Lower leg skin (tissue), 4 donors: ENCODE measurements at regions of chr17 and their contacts with region 1.

Region 1: GRCh38 chr17:79777894-79778503 is at the start of gene CBX2:
- DNase-seq: peak; percentile 28 to 94
- H3K4me3 ChIP-seq: peak within 1 kb of the TSS; percentile 29
- CTCF ChIP-seq: no peak
- POLR2A ChIP-seq: no peak
- total RNA-seq, gene CBX2: 1.9 to 3.8 (median 3.1) TPM

Region 2: GRCh38 chr17:79420318-79421243 is 357.4 kb before region 1 on chr17:
- intact Hi-C with region 1: no loop called
- DNase-seq: no peak
- H3K4me3 ChIP-seq: no peak overlapping the region
- CTCF ChIP-seq: no peak
- POLR2A ChIP-seq: no peak

Region 3: GRCh38 chr17:80219763-80220725 is 442.0 kb after region 1 on chr17 and contains the starts of genes SGSH and SLC26A11:
- intact Hi-C with region 1: loop called (anchors 5 kb)
- DNase-seq: peak; percentile 72 to 97
- H3K4me3 ChIP-seq: peak within 1 kb of the TSS; percentile 79
- CTCF ChIP-seq: no peak
- POLR2A ChIP-seq: no peak
- total RNA-seq, gene SGSH: 19.4 to 47.3 (median 37.0) TPM
- total RNA-seq, gene SLC26A11: 20.1 to 28.1 (median 22.3) TPM

Region 4: DNA sequence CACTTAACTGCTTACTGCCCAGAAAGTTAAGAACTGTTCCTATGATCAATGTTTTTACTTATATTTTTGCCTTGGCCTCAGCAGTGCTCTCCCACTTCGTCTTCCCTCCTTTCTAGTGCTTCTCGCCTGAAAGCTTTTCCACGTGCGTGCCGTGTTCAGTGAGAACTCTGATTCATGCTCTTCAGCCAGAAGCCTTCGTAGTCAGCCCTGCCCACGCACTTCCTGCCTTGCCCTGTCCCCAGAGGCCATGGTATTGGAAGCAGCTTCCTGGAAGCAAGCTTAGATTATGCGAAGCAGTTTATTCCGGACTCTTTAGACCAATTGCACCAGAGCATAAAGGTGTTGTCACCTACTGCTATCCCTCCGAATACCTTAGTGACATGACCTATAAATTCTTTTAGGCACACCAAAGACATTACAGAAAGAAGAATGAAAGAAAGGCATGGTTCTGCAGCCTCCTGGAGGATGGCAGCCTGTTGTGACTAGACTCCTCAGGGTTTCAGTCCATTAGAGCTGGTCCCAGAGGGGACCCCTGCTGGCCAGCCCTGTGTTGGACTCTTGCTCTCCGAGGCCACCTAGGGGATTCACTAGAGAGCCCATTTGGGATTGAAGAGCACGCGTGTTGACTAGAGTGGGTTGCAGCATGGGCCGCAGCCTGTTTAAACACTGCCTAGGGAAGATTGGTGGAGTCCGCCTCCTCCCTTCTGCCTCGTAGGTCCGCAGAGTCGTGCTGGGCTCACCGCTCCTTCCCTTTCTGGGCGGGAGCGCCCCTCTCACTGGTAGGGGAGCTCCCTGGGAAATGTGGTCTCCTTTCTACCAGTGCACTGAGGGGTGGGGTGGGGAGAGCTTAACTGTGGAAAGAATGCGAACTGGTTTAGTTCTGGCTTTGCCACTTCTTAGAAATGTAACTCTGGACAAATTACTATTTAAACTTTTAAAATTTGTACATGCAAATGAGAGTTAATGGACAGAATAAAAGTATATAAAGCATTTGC is 872.0 kb after region 1 on chr17:
- intact Hi-C with region 1: no loop called
- DNase-seq: peak in 1 of 2 donors; percentile 45
- H3K4me3 ChIP-seq: no peak overlapping the region
- CTCF ChIP-seq: no peak
- POLR2A ChIP-seq: no peak